Activated B cell treated with CpG ODN at 0.5 μM for 24 hours (primary cell): ENCODE measurements at regions of chr10 and their contacts with region 1.

Region 1: GRCh38 chr10:102432162-102432950 is at the start of gene CUEDC2:
- DNase-seq: peak; percentile 96
- ATAC-seq: peak; percentile 98
- H3K4me3 Mint-ChIP-seq: peak within 1 kb of the TSS; percentile 93
- H3K27ac Mint-ChIP-seq: peak within 1 kb of the TSS; percentile 75
- H3K4me1 Mint-ChIP-seq: peaks cover 45% of the 10 kb centered on the region
- H3K27me3 Mint-ChIP-seq: no peaks in the 10 kb centered on the region
- CTCF ChIP-seq: no peak
- total RNA-seq, gene CUEDC2: 43.7 and 46.0 TPM in 2 replicates

Region 2: DNA sequence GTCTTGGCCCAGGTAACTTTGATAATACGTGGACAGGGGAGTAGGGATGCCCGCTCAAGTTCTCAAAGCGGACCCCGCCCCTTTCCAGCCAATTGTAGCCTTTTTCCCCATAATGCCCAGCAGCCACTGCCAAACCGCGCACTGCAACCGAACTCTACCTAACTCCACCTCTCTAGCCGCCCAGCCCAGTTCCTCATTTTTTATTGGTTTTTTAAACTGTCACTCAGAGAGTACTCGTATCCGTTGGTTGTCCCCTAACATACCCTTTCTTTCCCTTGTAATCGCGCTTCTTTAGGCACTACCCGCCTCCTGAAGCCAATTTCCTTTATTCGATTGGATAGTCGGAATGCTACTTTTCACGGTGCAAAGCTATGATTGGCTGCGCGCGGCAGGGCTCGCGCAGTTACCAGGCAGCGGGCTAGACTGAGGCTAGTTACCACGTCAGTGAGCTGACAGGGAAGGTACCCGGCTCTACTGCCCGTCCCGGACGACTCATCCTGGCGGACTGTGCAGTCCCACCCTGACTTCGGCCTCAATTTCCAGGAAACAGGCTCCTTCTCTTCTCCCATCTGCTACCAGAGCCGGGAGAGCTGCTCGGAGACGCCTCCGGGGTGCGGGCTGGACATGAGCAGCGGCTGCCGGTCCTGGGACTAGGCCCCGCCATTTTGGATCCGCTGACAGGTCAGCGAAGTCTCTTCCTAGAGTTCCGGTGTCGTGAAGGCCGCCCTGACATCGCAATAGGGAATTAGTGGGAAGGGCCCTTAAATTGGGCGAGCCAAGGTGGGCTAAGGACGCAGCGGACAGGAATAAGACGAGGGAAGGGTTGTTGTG is 187.0 kb before region 1 on chr10 and contains the start of gene GBF1:
- CTCF ChIA-PET with region 1: no interaction called
- POLR2A ChIA-PET with region 1: no interaction called
- intact Hi-C with region 1: loop called (anchors 1 kb)
- DNase-seq: peak; percentile 76
- ATAC-seq: peak; percentile 88
- H3K4me3 Mint-ChIP-seq: peak within 1 kb of the TSS; percentile 98
- H3K27ac Mint-ChIP-seq: peak within 1 kb of the TSS; percentile 91
- H3K4me1 Mint-ChIP-seq: peaks cover 58% of the 10 kb centered on the region
- H3K27me3 Mint-ChIP-seq: peaks cover 22% of the 10 kb centered on the region
- CTCF ChIP-seq: no peak
- total RNA-seq, gene GBF1: 40.8 and 44.3 TPM in 2 replicates

Region 3: DNA sequence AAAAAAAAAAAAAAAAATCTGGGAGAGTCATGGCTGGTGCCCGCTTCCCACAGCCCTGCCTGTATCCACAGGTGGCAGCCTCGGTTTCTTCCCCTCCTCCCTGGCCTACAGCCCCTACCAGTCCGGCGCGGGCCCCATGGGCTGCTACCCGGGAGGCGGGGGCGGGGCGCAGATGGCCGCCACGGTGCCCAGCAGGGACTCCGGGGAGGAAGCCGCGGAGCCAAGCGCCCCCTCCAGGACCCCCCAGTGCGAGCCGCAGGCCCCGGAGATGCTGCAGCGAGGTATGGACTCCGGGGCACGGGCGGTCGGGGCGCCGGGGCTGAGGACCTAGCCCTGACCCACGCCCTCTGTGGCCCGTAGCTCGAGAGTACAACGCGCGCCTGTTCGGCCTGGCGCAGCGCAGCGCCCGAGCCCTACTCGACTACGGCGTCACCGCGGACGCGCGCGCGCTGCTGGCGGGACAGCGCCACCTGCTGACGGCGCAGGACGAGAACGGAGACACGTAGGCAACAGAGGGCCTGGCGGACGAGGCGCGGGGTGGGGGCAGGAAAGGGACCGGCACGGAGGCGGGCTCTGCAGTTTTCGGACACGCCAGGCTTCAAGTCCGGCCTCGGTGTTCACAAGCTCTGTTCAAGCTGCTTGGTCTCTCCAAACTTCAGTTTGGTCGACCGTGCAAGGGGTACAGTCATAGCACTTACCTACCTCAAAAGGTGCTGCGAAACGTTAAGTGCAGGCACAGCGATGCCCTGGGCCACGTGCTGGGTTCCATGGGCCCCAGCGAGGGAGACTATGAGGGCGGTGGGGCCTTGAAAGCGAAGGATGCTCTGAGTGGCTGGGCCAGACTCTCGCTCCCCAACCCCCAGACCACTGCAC is 32.9 kb before region 1 on chr10:
- CTCF ChIA-PET with region 1: no interaction called
- POLR2A ChIA-PET with region 1: interaction called, 52 read pairs
- intact Hi-C with region 1: loop called (anchors 1 kb)
- DNase-seq: peak; percentile 87
- ATAC-seq: peak; percentile 37
- H3K4me3 Mint-ChIP-seq: peak overlapping the region; percentile 94
- H3K27ac Mint-ChIP-seq: peak overlapping the region; percentile 97
- H3K4me1 Mint-ChIP-seq: peaks cover 54% of the 10 kb centered on the region
- H3K27me3 Mint-ChIP-seq: no peaks in the 10 kb centered on the region
- CTCF ChIP-seq: peak; percentile 95

Region 4: GRCh38 chr10:102444851-102445250 is 12.5 kb after region 1 on chr10:
- CTCF ChIA-PET with region 1: no interaction called
- POLR2A ChIA-PET with region 1: interaction called, 76 read pairs
- intact Hi-C with region 1: loop called (anchors 1 kb)
- DNase-seq: no peak
- ATAC-seq: no peak
- H3K4me3 Mint-ChIP-seq: no peak overlapping the region
- H3K27ac Mint-ChIP-seq: no peak overlapping the region
- H3K4me1 Mint-ChIP-seq: peaks cover 13% of the 10 kb centered on the region
- H3K27me3 Mint-ChIP-seq: no peaks in the 10 kb centered on the region
- CTCF ChIP-seq: no peak

Region 5: DNA sequence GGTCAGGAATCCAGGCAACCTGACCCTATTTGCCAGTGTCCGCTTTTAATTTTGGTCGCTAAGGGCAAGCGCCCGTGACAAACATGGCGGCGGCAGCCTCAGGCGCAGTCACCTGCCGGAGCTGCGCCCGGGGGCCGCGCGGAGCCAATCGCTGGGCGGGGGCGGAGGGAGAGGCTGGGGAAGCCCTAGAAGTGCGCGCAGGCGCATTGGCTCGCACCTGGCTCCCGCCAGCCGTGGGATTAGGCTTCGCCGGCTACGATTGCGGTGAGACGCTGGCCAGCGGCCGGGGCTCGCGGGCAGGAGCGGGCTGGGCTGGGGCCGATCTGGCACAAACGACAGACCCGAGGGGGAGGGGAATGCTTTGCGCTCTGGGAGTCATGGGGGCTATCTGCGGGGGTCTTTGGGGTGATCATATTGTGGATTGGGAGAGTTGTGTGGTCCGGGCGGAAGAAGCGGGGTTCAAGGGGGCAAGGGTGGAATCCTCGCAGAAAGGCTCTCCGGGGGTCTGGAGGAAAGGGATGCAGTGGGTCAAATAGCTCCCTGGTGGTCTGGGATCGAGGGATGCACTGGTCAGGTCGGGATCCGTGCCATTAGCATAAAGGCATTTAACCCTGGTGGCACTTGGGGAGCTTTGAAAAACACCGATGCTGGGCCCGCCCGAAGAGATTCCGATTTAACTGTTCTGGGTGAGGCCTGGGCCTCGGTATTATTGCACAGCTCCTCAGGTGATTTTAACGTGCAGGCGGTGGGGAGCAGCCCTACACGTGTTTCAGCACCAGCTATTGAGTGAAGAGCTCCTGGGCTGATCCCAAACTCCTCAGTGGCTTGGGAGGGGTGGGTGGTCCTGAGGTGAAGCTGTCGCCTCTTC is 29.1 kb after region 1 on chr10:
- CTCF ChIA-PET with region 1: no interaction called
- POLR2A ChIA-PET with region 1: interaction called, 12 read pairs
- intact Hi-C with region 1: loop called (anchors 1 kb)
- DNase-seq: peak; percentile 90
- ATAC-seq: peak; percentile 99
- H3K4me3 Mint-ChIP-seq: peak overlapping the region; percentile 88
- H3K27ac Mint-ChIP-seq: peak overlapping the region; percentile 85
- H3K4me1 Mint-ChIP-seq: peaks cover 31% of the 10 kb centered on the region
- H3K27me3 Mint-ChIP-seq: no peaks in the 10 kb centered on the region
- CTCF ChIP-seq: no peak

Region 6: GRCh38 chr10:102546606-102547320 is 114.4 kb after region 1 on chr10:
- CTCF ChIA-PET with region 1: no interaction called
- POLR2A ChIA-PET with region 1: no interaction called
- intact Hi-C with region 1: no loop called
- DNase-seq: no peak
- ATAC-seq: no peak
- H3K4me3 Mint-ChIP-seq: no peak overlapping the region
- H3K27ac Mint-ChIP-seq: no peak overlapping the region
- H3K4me1 Mint-ChIP-seq: peaks cover 7% of the 10 kb centered on the region
- H3K27me3 Mint-ChIP-seq: no peaks in the 10 kb centered on the region
- CTCF ChIP-seq: no peak